ENCODE measurements at regions of chr2 and their contacts with region 1.

Region 1: GRCh38 chr2:240060977-240061591 is 7.8 kb upstream of the OR6B3 start:
- DNase-seq: peak; percentile 63
- H3K4me3 ChIP-seq: no peak overlapping the region; a peak in 1 of 4 replicates
- H3K27ac ChIP-seq: no peak overlapping the region
- H3K4me1 ChIP-seq: no peaks in the 10 kb centered on the region; a peak in 1 of 4 replicates
- H3K27me3 ChIP-seq: peaks cover 16% of the 10 kb centered on the region; the same call in 1 of the 2 replicates
- CTCF ChIP-seq: peak; percentile 71
- EP300 ChIP-seq: no peak
- RAD21 ChIP-seq: peak; percentile 83

Region 2: GRCh38 chr2:239806758-239807434 is 254.2 kb before region 1 on chr2:
- CTCF ChIA-PET with region 1: no interaction called
- POLR2A ChIA-PET with region 1: no interaction called
- DNase-seq: no peak
- H3K4me3 ChIP-seq: no peak overlapping the region
- H3K27ac ChIP-seq: no peak overlapping the region
- H3K4me1 ChIP-seq: peaks cover 0 to 6% of the 10 kb centered on the region in 2 experiments; a peak in 1 of 4 replicates
- H3K27me3 ChIP-seq: no peaks in the 10 kb centered on the region
- CTCF ChIP-seq: no peak
- EP300 ChIP-seq: no peak
- RAD21 ChIP-seq: no peak

Region 3: DNA sequence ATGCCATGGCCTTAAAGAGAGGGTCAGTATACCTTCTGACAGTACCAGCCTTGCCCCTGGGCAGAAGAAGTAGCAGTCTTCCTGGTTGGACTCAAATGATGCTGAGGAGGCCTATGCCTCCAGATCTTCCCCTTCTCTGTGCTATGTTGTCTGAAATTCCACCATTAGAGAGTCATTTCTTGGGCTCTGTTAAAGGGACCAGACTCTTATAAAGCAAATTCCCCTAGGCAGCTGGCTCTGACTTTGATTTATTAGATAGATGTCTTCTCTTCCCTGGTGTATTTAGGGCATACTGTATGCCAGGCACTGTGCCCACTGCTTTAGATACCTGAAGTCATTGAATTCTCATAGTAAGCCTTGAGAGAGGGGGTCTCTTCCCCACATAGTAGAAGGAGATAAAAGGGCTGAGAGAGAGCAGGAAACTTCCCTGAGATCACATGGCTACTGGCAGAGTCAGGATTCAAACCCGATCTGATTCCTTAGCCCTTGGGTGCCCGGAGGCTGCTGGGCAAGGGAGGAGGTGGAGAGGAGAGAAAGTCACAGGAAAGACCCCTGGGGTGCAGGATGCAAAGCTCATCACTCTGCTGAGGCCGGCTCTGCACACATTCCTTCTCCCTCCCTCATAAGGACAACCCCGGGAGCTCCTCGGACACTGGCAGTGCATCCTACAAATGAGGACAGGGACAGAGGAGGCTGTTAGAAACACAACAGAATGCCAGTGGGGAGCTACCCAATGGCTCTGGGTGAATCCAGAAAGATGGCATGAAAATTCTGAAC is 52.0 kb after region 1 on chr2:
- CTCF ChIA-PET with region 1: interaction called, 12 read pairs
- POLR2A ChIA-PET with region 1: no interaction called
- DNase-seq: peak; percentile 8
- H3K4me3 ChIP-seq: no peak overlapping the region
- H3K27ac ChIP-seq: no peak overlapping the region
- H3K4me1 ChIP-seq: no peaks in the 10 kb centered on the region
- H3K27me3 ChIP-seq: peaks cover 5% of the 10 kb centered on the region; the same call in 1 of the 2 replicates
- CTCF ChIP-seq: no peak
- EP300 ChIP-seq: no peak
- RAD21 ChIP-seq: no peak

Region 4: DNA sequence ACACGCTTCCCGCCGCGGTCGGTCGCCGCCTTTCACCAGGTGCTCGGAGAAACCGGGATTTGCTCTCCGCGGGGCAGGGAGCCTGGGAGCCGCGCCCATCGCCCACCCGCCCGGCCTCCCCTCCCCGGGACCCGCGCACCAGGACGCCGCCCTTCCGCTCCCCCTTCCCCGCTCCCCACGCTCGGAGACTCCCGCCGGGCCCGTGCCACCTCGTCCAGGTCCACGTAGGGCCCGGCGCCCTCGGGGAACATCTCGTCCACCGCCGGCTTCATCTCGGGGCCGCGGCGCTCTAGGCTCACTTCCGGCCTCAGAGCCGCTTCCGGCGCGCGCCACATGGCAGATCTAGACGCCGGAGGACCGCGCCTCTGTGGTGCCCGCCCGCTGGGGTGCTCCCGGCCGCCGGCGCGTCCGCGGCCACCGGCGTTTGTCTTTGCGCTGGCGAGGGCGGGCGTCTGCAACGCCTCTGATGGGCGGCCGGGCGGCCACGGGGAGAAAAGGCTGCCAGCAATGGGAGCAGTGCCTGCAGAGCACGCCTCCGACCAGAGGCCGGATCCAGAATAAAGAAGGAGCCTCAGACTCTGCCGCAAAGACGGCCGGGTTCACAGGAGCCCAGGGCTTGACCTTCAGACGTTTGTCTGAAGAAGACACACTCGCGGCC is 75.1 kb after region 1 on chr2 and contains the start of gene COPS9:
- CTCF ChIA-PET with region 1: interaction called, 291 read pairs
- POLR2A ChIA-PET with region 1: no interaction called
- DNase-seq: peak; percentile 98
- H3K4me3 ChIP-seq: peak within 1 kb of the TSS; percentile 81 to 99
- H3K27ac ChIP-seq: peak within 1 kb of the TSS in 1 of 2 experiments; percentile 47; a peak in 2 of 4 replicates
- H3K4me1 ChIP-seq: peaks cover 11 to 18% of the 10 kb centered on the region in 2 experiments; a peak in 2 of 4 replicates
- H3K27me3 ChIP-seq: no peaks in the 10 kb centered on the region
- CTCF ChIP-seq: no peak
- EP300 ChIP-seq: no peak
- RAD21 ChIP-seq: no peak
- polyA plus RNA-seq, gene COPS9: 511 and 717 TPM in 2 replicates

Measured in SK-N-SH (cell line).